Heart left ventricle (tissue), 16 donors: ENCODE measurements at regions of chr14 and their contacts with region 1.

Region 1: GRCh38 chr14:61308198-61308597 is 13.2 kb upstream of the PRKCH start:
- DNase-seq: no peak
- ATAC-seq: peak; percentile 58 to 94 (median 74)
- H3K4me3 ChIP-seq: no peak overlapping the region
- H3K27ac ChIP-seq: peak overlapping the region in 10 of 12 donors; percentile 33 to 73 (median 56)
- H3K4me1 ChIP-seq: peaks cover 0 to 9% (median 2%) of the 10 kb centered on the region in 12 donors
- H3K27me3 ChIP-seq: no peaks in the 10 kb centered on the region
- CTCF ChIP-seq: no peak
- POLR2A ChIP-seq: no peak

Region 2: DNA sequence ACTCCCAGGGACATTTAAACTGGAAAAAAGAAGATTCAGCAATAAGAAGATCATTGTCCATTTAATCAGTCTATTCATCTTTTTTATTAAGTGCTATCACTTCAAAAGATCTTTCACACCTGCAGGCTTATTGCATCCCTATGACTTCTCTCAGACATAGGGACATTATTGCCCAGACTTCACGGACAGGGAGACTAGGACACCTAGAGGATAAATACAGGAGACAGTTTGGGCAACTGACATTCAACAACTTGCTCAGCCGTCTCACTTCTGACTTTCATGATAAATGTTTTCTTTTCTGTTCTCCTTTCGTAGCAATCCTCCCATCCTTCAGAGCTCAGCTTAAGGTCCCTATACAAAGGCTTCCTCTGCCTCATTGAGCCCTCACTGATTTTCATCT is 111.4 kb before region 1 on chr14:
- intact Hi-C with region 1: no loop called
- DNase-seq: no peak
- ATAC-seq: no peak
- H3K4me3 ChIP-seq: no peak overlapping the region
- H3K27ac ChIP-seq: no peak overlapping the region
- H3K4me1 ChIP-seq: no peaks in the 10 kb centered on the region
- H3K27me3 ChIP-seq: peaks cover 0 to 10% (median 0%) of the 10 kb centered on the region in 9 donors
- CTCF ChIP-seq: no peak
- POLR2A ChIP-seq: no peak

Region 3: GRCh38 chr14:61438860-61439684 is 130.9 kb after region 1 on chr14:
- intact Hi-C with region 1: loop called in 1 of 10 experiments (anchors 10 kb)
- DNase-seq: peak in 2 of 5 donors; percentile 30 to 40
- ATAC-seq: peak; percentile 76 to 82 (median 78)
- H3K4me3 ChIP-seq: peak overlapping the region in 5 of 12 donors; percentile 4 to 36 (median 7)
- H3K27ac ChIP-seq: peak overlapping the region in 8 of 12 donors; percentile 3 to 82 (median 25)
- H3K4me1 ChIP-seq: peaks cover 6 to 68% (median 30%) of the 10 kb centered on the region in 12 donors
- H3K27me3 ChIP-seq: no peaks in the 10 kb centered on the region
- CTCF ChIP-seq: no peak
- POLR2A ChIP-seq: no peak

Region 4: GRCh38 chr14:61719344-61720293 is 411.4 kb after region 1 on chr14:
- intact Hi-C with region 1: loop called in 1 of 10 experiments (anchors 10 kb)
- DNase-seq: no peak
- ATAC-seq: peak in 2 of 4 donors; percentile 36 to 39
- H3K4me3 ChIP-seq: no peak overlapping the region
- H3K27ac ChIP-seq: peak overlapping the region in 8 of 12 donors; percentile 6 to 45 (median 18)
- H3K4me1 ChIP-seq: peaks cover 0 to 58% (median 44%) of the 10 kb centered on the region in 12 donors
- H3K27me3 ChIP-seq: no peaks in the 10 kb centered on the region
- CTCF ChIP-seq: no peak
- POLR2A ChIP-seq: no peak